Activated B cell treated with CpG ODN at 0.5 μM for 24 hours (primary cell): ENCODE measurements at regions of chr6 and their contacts with region 1.

Region 1: GRCh38 chr6:62357835-62358234 is 71.8 kb upstream of the KHDRBS2 start:
- DNase-seq: no peak
- ATAC-seq: no peak
- H3K4me3 Mint-ChIP-seq: no peak overlapping the region
- H3K27ac Mint-ChIP-seq: no peak overlapping the region
- H3K4me1 Mint-ChIP-seq: peaks cover 5% of the 10 kb centered on the region
- H3K27me3 Mint-ChIP-seq: no peaks in the 10 kb centered on the region
- CTCF ChIP-seq: no peak

Region 2: GRCh38 chr6:62393608-62394007 is 35.8 kb after region 1 on chr6:
- CTCF ChIA-PET with region 1: no interaction called
- POLR2A ChIA-PET with region 1: no interaction called
- intact Hi-C with region 1: loop called (anchors 5 kb)
- DNase-seq: no peak
- ATAC-seq: no peak
- H3K4me3 Mint-ChIP-seq: no peak overlapping the region
- H3K27ac Mint-ChIP-seq: no peak overlapping the region
- H3K4me1 Mint-ChIP-seq: peaks cover 23% of the 10 kb centered on the region
- H3K27me3 Mint-ChIP-seq: no peaks in the 10 kb centered on the region
- CTCF ChIP-seq: no peak